HepG2 (cell line): ENCODE measurements at regions of chr14 and their contacts with region 1.

Region 1: DNA sequence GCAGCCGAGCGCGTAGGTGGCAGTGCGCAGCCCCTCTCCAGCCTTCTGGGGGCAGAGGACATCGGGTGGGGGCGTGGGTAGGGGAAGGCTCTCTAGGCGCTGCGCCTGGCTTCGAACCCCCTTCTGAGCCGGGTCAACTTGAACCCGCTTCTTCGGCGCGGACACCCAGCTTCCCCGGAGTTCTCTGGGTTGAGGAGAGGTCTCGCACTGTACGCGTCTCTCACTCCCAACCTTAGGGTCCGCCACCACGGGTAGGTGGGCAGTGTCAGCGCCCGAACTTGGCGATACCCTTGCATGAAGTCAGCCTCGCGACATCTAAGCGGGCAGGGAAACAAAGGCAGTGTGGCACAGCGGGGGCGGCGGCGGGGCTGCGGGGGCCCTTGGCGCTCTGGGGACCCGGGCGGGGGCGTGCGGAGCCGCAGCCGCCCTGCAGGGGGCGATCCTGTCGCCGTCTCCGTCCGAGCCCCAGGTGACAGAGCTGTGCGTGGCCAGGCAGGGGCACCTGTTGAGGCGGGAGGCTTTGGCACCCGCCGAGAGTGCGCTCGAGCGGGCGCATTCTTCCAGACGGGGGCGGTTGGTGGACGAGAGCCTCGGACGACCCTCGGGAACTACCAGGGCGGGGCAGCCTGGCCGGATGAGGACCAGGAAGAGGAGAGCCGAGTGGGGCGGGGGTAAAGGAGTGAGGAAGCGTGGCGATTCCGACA is 1.1 kb downstream of the GALNT16 start:
- DNase-seq: no peak
- ATAC-seq: peak; percentile 82
- H3K4me3 ChIP-seq: peak overlapping the region; percentile 37 to 72 (median 67)
- H3K27ac ChIP-seq: no peak overlapping the region
- H3K4me1 ChIP-seq: peaks cover 20% of the 10 kb centered on the region
- H3K27me3 ChIP-seq: peaks cover 6 to 38% of the 10 kb centered on the region in 2 experiments; a peak in 4 of 5 replicates
- CTCF ChIP-seq: peak; percentile 72
- EP300 ChIP-seq: no peak
- POLR2A ChIP-seq: no peak
- RAD21 ChIP-seq: peak; percentile 20; the same call in 1 of the 2 replicates

Region 2: DNA sequence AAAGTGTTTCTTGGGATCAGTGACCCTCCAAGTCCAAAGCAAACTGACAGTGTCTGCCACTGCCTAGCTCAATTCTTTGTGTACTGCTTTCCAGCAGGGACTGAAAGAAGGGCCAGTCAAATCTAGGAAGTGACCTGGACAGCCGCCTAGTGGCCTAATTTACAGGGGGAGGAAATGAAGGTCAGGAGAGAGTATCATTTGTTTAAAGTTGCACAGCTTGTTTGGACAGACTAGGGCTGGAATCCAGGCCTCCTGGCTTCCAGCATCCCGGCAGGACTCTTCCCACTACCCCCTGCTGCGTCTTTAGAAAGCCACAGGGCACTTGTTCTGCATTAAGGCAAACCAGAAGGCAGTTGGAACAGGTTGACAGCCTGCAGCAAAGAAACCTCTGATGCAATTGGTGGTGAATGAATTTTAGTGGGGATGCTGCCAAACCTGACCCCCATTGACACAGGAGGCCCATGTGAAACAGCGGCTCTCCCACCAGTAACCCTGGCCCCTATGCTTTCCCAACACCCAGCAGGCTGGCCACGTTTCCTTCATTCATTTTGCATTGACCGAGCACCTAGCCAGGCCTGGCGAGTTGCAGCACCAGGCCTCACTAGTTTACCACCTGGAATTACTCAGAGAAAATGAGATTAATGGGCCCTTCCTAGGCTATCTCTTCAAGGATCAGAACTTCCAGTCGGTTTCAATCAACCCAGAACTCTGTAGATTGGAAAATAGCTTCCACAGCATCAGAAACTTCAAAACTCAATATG is 27.2 kb after region 1 on chr14:
- CTCF ChIA-PET with region 1: interaction called, 3 read pairs
- POLR2A ChIA-PET with region 1: no interaction called
- in situ Hi-C with region 1: no loop called
- intact Hi-C with region 1: loop called (anchors 1 kb)
- DNase-seq: peak; percentile 23
- ATAC-seq: peak; percentile 78
- H3K4me3 ChIP-seq: no peak overlapping the region
- H3K27ac ChIP-seq: no peak overlapping the region
- H3K4me1 ChIP-seq: peaks cover 25% of the 10 kb centered on the region
- H3K27me3 ChIP-seq: 0 out of 5 replicates have a peak, but pooled peaks cover 0 to 2% of the 10 kb centered on the region in 2 experiments
- CTCF ChIP-seq: peak; percentile 67
- EP300 ChIP-seq: no peak
- POLR2A ChIP-seq: no peak
- RAD21 ChIP-seq: no peak

Region 3: DNA sequence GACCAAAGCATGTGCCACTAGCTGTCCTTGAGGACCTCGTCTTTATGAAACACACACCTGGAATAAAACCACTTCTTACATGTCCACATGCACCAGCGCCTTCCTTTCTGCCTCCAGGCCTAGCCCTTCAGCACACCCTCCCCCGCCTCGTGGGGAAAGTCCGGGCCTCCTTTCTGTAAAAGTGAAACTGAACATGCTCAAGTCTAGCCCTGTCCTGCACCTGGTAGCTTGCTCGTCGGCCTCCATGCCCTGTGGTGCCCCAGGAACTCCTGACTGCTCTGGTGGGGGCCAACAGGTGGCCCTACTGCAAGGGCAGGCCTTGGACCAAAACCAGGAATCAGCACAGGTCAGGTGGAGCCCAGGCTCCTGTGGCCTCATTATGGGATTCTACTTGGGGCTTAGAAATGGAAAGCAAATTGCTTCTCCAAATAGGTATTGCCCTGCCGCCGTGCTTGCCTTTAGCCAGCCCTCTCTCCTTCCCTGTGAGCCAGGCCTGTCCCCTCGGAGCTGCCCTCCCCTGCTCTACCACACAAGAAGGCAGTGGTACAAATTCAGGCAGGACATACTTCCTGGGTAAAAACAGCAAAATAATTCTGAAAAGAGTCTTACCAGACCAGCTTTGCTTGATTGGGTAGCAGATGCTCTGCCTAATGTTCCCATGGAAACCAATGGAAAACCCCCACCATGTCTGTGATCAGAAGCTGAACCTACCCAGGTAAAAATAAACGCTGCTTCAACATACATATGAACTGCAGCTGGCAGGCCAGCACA is 93.6 kb after region 1 on chr14:
- CTCF ChIA-PET with region 1: no interaction called
- POLR2A ChIA-PET with region 1: no interaction called
- in situ Hi-C with region 1: loop called (anchors 5 kb)
- intact Hi-C with region 1: no loop called
- DNase-seq: peak; percentile 16
- ATAC-seq: peak; percentile 68
- H3K4me3 ChIP-seq: peak overlapping the region; percentile 50 to 68 (median 56)
- H3K27ac ChIP-seq: no peak overlapping the region
- H3K4me1 ChIP-seq: peaks cover 30% of the 10 kb centered on the region
- H3K27me3 ChIP-seq: peaks cover 1 to 24% of the 10 kb centered on the region in 2 experiments; a peak in 2 of 5 replicates
- CTCF ChIP-seq: no peak
- EP300 ChIP-seq: no peak
- POLR2A ChIP-seq: no peak
- RAD21 ChIP-seq: no peak

Region 4: DNA sequence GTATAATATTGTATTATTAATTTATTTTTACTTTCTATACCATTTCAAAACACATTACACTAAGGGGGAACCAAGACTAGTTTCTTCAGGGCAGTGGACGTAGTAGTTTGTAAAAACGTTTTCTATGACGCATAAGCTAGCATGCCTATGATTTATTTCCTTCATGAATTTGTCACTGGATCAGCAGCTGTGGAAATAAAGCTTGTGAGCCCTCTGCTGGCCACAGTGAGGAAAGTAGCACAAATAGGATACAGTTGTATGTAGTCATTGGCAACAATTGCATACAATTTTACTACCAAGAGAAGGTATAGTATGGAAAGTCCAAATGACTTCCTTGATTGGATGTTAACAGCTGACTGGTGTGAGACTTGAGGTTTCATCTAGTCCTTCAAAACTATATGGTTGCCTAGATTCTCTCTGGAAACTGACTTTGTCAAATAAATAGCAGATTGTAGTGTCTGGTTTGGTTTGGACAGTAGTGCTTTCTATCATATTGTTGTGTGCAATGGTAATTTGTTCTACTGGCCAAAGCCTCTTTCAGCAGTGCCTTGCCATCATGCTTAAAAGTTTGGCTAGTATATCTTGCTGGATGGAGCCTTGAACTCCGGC is 199.2 kb after region 1 on chr14:
- CTCF ChIA-PET with region 1: no interaction called
- POLR2A ChIA-PET with region 1: no interaction called
- in situ Hi-C with region 1: loop called (anchors 10 kb)
- intact Hi-C with region 1: no loop called
- DNase-seq: peak; percentile 73
- ATAC-seq: peak; percentile 79
- H3K4me3 ChIP-seq: no peak overlapping the region
- H3K27ac ChIP-seq: no peak overlapping the region
- H3K4me1 ChIP-seq: no peaks in the 10 kb centered on the region
- H3K27me3 ChIP-seq: no peaks in the 10 kb centered on the region
- CTCF ChIP-seq: peak; percentile 79
- EP300 ChIP-seq: no peak
- POLR2A ChIP-seq: no peak
- RAD21 ChIP-seq: peak; percentile 59